CD4-positive, alpha-beta T cell (primary cell): ENCODE measurements at regions of chr20 and their contacts with region 1.

Region 1: DNA sequence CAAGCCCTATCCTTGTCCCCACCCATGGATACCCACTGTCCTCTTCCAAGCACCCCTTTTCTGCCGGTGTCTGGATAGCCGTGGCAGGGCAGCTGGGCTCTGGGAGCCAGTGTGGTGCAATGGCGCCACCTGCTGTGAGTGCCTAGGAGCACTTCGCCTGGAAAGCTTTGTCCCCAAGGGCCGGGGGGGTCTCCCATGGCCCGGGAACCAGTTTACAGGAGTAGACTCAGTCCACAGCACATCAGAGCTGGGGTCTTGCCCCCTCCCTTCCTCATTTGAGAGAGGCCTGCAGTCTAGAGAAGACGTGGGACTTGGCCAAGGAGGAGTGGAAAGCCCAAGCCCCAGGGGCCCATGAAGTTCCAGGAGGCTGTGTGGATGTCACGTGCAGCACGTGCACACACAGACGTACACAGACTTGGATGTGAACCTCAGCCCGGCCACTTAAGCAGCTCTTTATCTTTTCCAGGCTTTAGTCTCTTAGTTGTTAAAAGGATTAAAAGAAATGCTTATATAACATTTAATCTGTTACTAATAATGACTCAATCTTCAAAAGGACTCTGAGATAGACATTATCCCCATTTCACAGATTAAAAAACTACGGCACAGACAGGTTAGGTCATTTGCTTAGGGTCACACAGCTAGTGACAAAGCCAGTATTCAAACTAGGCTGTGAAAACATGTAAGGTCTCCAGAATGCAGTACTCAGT is 40.9 kb upstream of the CDH22 start:
- DNase-seq: peak; percentile 22 to 70 (median 39)
- ATAC-seq: peak; percentile 61
- H3K4me3 ChIP-seq: no peak overlapping the region
- H3K4me3 Mint-ChIP-seq: no peak overlapping the region
- H3K27ac ChIP-seq: no peak overlapping the region
- H3K27ac Mint-ChIP-seq: peak overlapping the region; percentile 42
- H3K4me1 ChIP-seq: peaks cover 10% of the 10 kb centered on the region
- H3K4me1 Mint-ChIP-seq: peaks cover 18% of the 10 kb centered on the region
- H3K27me3 ChIP-seq: no peaks in the 10 kb centered on the region
- H3K27me3 Mint-ChIP-seq: no peaks in the 10 kb centered on the region
- CTCF ChIP-seq: peak; percentile 61

Region 2: DNA sequence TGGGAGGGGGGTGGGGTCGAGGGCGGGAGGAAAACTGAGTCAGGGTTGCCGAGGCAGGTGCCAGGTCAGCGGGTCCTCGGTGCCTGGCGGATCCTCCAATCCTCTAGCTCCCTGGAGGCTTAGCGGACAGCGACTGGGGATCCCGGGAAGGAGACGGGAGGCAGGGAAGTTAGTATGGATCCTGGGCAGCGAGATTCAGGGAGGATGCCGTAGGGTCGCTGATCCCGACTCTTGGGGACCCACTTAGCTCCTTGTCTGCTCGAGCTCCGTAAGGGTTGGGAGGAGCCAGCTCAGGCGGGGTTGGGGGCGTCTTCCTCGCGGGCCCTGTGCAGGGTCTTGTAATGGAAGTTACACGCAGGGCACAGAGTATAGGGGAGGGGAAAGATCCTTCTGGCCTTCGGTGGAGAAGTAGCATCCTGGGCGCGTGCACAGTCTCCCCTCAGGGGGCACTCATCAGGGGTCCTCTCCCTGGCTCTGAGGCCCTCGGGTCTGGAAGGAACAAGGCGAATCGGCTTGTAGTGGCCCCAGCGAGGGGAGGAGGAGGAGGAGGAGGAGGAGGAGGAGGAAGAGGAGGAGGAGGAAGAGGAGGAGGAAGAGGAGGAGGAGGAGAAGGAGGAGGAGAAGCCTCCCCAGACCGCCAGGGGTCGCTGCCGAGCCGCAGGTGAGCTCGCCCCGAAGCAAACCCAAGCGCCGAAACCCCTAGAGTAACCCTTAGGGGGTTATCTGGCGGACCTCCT is 326.6 kb before region 1 on chr20:
- CTCF ChIA-PET with region 1: interaction called, 4 read pairs
- POLR2A ChIA-PET with region 1: no interaction called
- intact Hi-C with region 1: loop called in 1 of 2 experiments (anchors 5 kb)
- DNase-seq: peak; percentile 59 to 85 (median 69)
- ATAC-seq: peak; percentile 59
- H3K4me3 ChIP-seq: peak overlapping the region; percentile 25
- H3K4me3 Mint-ChIP-seq: peak overlapping the region; percentile 69
- H3K27ac ChIP-seq: no peak overlapping the region
- H3K27ac Mint-ChIP-seq: no peak overlapping the region
- H3K4me1 ChIP-seq: peaks cover 25% of the 10 kb centered on the region
- H3K4me1 Mint-ChIP-seq: peaks cover 23% of the 10 kb centered on the region
- H3K27me3 ChIP-seq: peaks cover 25 to 56% of the 10 kb centered on the region in 2 experiments
- H3K27me3 Mint-ChIP-seq: peaks cover 74% of the 10 kb centered on the region
- CTCF ChIP-seq: peak; percentile 75

Region 3: DNA sequence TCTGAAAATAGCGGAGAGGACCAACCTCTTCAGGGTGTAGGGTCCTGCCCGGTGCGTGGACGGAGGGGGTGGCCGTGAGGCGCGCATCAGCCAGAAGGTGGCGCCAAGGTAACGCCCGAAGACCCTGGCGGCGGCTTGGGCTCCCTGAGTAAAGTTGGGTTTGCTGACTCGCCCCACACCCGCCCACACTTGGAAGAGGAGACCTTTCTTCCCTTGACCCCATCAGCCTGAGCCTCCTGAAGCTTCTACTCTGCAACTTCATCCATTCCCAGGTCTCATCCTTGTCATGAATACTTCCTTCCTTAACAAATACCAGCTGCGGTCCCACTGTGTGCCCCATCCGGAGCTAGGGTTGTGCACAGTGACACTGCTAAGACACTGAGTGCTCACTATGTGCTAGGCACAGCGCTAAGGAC is 216.5 kb before region 1 on chr20:
- CTCF ChIA-PET with region 1: interaction called, 3 read pairs
- POLR2A ChIA-PET with region 1: no interaction called
- intact Hi-C with region 1: loop called in 1 of 2 experiments (anchors 2 kb)
- DNase-seq: peak; percentile 26 to 73 (median 49)
- ATAC-seq: peak; percentile 68
- H3K4me3 ChIP-seq: no peak overlapping the region
- H3K4me3 Mint-ChIP-seq: no peak overlapping the region
- H3K27ac ChIP-seq: no peak overlapping the region
- H3K27ac Mint-ChIP-seq: no peak overlapping the region
- H3K4me1 ChIP-seq: no peaks in the 10 kb centered on the region
- H3K4me1 Mint-ChIP-seq: no peaks in the 10 kb centered on the region
- H3K27me3 ChIP-seq: peaks cover 15 to 26% of the 10 kb centered on the region in 2 experiments
- H3K27me3 Mint-ChIP-seq: peaks cover 65% of the 10 kb centered on the region
- CTCF ChIP-seq: peak; percentile 76

Region 4: DNA sequence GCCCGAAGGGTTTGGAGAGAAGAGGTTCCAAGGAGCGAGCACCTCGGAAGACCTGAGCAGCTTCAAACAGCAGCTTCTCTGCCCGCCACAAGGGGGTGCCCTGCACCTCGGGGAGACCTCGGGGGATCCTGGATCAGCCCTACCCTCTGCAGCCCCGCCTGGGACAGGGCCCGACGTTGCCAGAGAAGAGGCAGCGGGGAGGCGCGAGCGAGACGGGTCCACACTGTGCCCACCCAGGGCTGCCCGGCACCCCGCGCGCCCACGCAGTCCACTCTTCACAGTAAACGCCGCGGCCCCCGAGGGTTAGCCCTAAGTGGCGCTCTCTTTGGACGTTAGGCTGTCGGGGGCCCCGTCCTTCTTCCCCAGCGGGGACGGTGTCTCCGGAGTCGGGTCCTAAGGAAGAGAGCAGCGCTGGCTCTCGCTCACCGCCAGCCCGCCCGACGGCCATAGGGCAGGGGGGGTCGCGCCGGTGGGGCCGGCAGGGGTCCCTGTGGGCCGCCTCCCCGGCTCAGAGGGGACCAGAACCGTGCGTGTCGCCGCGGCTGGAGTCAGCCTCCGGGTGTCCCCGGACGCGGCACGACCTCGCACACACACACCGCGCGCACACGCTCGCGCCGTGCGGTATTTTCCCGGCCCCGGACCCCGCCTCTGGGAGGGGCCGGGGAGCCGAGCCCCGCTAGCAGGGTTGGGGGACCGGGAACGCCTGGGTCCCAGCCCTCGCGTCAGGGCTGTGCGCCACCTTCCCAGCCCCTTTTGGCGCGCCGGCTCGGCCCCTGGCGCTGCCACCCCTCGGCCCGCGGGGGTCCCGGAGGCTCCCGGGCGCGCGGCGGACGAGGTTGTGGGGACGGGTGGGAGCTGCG is 41.8 kb before region 1 on chr20:
- CTCF ChIA-PET with region 1: interaction called, 20 read pairs
- POLR2A ChIA-PET with region 1: no interaction called
- intact Hi-C with region 1: loop called (anchors 2 to 5 kb)
- DNase-seq: peak; percentile 56 to 88 (median 68)
- ATAC-seq: peak; percentile 84
- H3K4me3 ChIP-seq: peak overlapping the region; percentile 37
- H3K4me3 Mint-ChIP-seq: peak overlapping the region; percentile 65
- H3K27ac ChIP-seq: no peak overlapping the region
- H3K27ac Mint-ChIP-seq: no peak overlapping the region
- H3K4me1 ChIP-seq: peaks cover 22% of the 10 kb centered on the region
- H3K4me1 Mint-ChIP-seq: peaks cover 31% of the 10 kb centered on the region
- H3K27me3 ChIP-seq: peaks cover 46 to 67% of the 10 kb centered on the region in 2 experiments
- H3K27me3 Mint-ChIP-seq: peaks cover 83% of the 10 kb centered on the region
- CTCF ChIP-seq: peak; percentile 77